ENCODE measurements at regions of chr6 and their contacts with region 1.

Region 1: GRCh38 chr6:25556516-25556915 is 95.5 kb upstream of the SCGN start:
- DNase-seq: peak; percentile 78 to 88 (median 82)
- H3K4me3 ChIP-seq: no peak overlapping the region
- H3K27ac ChIP-seq: no peak overlapping the region
- H3K4me1 ChIP-seq: no peaks in the 10 kb centered on the region
- H3K27me3 ChIP-seq: no peaks in the 10 kb centered on the region

Region 2: GRCh38 chr6:25223490-25223991 is 333.0 kb before region 1 on chr6:
- CTCF ChIA-PET with region 1: interaction called, 19 read pairs
- POLR2A ChIA-PET with region 1: no interaction called
- DNase-seq: peak; percentile 73 to 85 (median 79)
- H3K4me3 ChIP-seq: peak overlapping the region in 5 of 7 experiments; percentile 17 to 76 (median 47)
- H3K27ac ChIP-seq: no peak overlapping the region
- H3K4me1 ChIP-seq: peaks cover 5 to 20% (median 9%) of the 10 kb centered on the region in 4 experiments
- H3K27me3 ChIP-seq: no peaks in the 10 kb centered on the region

Region 3: DNA sequence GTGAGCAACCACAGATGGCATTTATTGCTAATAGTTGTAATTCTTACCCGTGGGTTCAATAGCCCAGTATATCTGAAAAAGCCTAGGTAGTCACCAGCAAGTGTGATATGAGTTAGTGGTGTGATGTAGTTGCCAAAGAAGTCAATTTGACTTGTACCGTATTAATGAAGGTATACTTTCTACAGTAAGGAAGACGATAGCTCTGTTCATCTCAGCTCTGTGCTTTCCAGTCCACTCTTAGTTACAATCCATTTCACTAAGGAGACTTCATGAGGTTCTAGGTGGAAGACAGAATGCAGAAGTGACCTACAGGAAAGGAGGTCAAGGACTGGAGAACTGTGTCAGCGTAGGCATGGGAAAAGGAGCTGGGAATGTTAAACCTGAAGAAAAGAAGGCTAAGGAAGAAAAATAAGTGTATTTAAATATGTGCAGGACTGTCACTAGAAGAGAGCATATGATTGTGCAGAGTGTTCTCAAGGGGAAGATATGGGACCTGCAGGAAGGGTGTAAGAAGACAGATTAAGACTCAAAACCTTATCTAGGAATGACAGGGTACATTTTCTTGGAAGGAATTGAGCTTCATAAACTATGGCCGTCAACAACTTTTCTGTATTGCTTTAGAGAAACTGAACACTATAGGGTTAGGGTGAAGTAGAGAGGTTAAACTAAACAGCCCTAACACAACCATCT is 21.4 kb before region 1 on chr6:
- CTCF ChIA-PET with region 1: interaction called, 17 read pairs
- POLR2A ChIA-PET with region 1: no interaction called
- DNase-seq: peak; percentile 57 to 85 (median 69)
- H3K4me3 ChIP-seq: no peak overlapping the region
- H3K27ac ChIP-seq: no peak overlapping the region
- H3K4me1 ChIP-seq: peaks cover 0 to 32% (median 4%) of the 10 kb centered on the region in 4 experiments
- H3K27me3 ChIP-seq: no peaks in the 10 kb centered on the region